ENCODE measurements at regions of chr7 and their contacts with region 1.

Region 1: GRCh38 chr7:26193432-26194207 is 6.9 kb downstream of the HNRNPA2B1 start:
- DNase-seq: no peak
- ATAC-seq: peak; percentile 56
- H3K4me3 ChIP-seq: peak overlapping the region; percentile 49; the same call in 1 of the 2 replicates
- H3K27ac ChIP-seq: no peak overlapping the region
- H3K4me1 ChIP-seq: peaks cover 27% of the 10 kb centered on the region
- H3K27me3 ChIP-seq: no peaks in the 10 kb centered on the region
- CTCF ChIP-seq: no peak
- EP300 ChIP-seq: no peak
- POLR2A ChIP-seq: no peak
- RAD21 ChIP-seq: no peak

Region 2: DNA sequence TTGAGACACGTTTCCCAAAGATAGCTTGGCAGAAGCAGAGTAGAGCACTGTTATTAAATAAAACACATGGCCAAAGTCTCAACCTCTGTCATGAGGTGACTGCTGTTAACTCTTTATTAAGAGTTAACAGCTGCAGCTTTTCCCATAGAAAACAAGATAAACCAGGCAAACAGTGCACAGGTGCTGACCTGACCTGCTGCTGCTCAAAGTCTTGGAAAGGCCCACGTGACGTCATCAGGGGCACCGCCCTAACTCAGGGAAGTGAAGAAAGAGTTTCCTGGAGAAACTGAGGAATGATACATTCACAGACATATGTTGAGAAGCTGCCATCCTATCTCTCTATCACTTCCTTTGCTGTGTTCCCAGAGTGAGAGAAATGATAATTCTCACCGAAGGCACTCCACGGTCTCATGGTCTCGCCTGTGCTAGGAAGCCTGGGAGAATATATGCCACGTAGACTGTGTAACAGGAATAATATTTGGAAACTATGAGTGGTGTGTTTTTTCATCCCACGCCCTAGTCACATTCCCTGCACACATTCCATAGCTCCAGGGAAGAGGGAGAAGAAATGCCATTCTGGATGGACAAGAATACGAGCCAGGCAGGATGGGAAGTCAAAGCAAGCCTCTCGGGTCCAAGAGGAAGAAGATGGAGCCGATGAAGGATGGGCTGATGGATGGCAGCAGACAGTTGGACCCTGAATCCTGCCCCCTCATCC is 187.8 kb before region 1 on chr7:
- CTCF ChIA-PET with region 1: no interaction called
- POLR2A ChIA-PET with region 1: no interaction called
- RAD21 ChIA-PET with region 1: no interaction called
- SMC1A ChIA-PET with region 1: no interaction called
- in situ Hi-C with region 1: no loop called
- intact Hi-C with region 1: no loop called
- DNase-seq: no peak
- ATAC-seq: no peak
- H3K4me3 ChIP-seq: no peak overlapping the region
- H3K27ac ChIP-seq: no peak overlapping the region
- H3K4me1 ChIP-seq: no peaks in the 10 kb centered on the region
- H3K27me3 ChIP-seq: peaks cover 0 to 4% of the 10 kb centered on the region in 2 experiments; a peak in 3 of 4 replicates
- CTCF ChIP-seq: no peak
- EP300 ChIP-seq: no peak
- POLR2A ChIP-seq: no peak
- RAD21 ChIP-seq: no peak

Region 3: GRCh38 chr7:26160881-26161280 is 32.7 kb before region 1 on chr7:
- CTCF ChIA-PET with region 1: interaction called, 104 read pairs
- POLR2A ChIA-PET with region 1: interaction called, 206 read pairs
- RAD21 ChIA-PET with region 1: interaction called, 164 read pairs
- SMC1A ChIA-PET with region 1: interaction called, 198 read pairs
- in situ Hi-C with region 1: no loop called
- intact Hi-C with region 1: loop called (anchors 2 kb)
- DNase-seq: no peak
- ATAC-seq: no peak
- H3K4me3 ChIP-seq: no peak overlapping the region
- H3K27ac ChIP-seq: no peak overlapping the region
- H3K4me1 ChIP-seq: peaks cover 28% of the 10 kb centered on the region
- H3K27me3 ChIP-seq: no peaks in the 10 kb centered on the region
- CTCF ChIP-seq: no peak
- EP300 ChIP-seq: no peak
- POLR2A ChIP-seq: no peak
- RAD21 ChIP-seq: no peak

Region 4: DNA sequence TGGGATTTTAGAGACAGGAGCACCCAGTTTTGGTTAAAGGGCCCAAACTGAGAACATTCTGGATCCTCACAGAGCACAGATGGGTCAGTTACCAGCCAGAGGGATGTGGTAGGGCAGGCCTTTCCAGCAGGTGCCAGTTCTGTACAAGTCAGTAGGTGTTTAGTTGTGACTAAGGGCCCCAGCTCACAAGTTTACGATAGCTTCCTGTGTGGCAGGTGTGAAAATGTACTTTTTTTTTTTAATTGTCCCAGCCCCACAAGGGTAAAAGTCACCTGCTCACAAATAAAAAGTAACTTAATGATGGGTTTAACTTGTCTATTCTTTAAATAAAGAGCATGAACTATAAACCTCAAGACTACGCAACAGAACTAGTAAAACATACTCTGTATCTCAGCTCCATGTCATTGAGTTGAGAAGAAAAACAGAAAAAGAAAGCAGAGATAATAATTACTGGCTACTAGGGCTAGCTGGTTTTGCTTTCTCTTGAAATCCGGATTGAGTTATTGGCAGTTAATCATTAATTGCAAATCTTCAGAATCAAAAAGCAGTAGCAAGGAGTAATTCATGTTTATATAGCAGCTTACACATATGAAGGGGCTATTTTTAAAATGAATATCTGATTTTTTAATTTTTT is 26.2 kb before region 1 on chr7:
- CTCF ChIA-PET with region 1: interaction called, 29 read pairs
- POLR2A ChIA-PET with region 1: interaction called, 206 read pairs
- RAD21 ChIA-PET with region 1: interaction called, 164 read pairs
- SMC1A ChIA-PET with region 1: interaction called, 198 read pairs
- in situ Hi-C with region 1: no loop called
- intact Hi-C with region 1: no loop called
- DNase-seq: no peak
- ATAC-seq: peak; percentile 94
- H3K4me3 ChIP-seq: 0 out of 2 replicates have a peak overlapping the region, but pooled peaks have one; percentile 31
- H3K27ac ChIP-seq: peak overlapping the region; percentile 43
- H3K4me1 ChIP-seq: peaks cover 17% of the 10 kb centered on the region
- H3K27me3 ChIP-seq: no peaks in the 10 kb centered on the region
- CTCF ChIP-seq: no peak
- EP300 ChIP-seq: no peak
- POLR2A ChIP-seq: no peak
- RAD21 ChIP-seq: no peak

Region 5: GRCh38 chr7:26182283-26182682 is 11.3 kb before region 1 on chr7:
- CTCF ChIA-PET with region 1: interaction called, 23 read pairs
- POLR2A ChIA-PET with region 1: interaction called, 25 read pairs
- RAD21 ChIA-PET with region 1: interaction called, 17 read pairs
- SMC1A ChIA-PET with region 1: interaction called, 23 read pairs
- in situ Hi-C with region 1: no loop called
- intact Hi-C with region 1: no loop called
- DNase-seq: no peak
- ATAC-seq: no peak
- H3K4me3 ChIP-seq: no peak overlapping the region
- H3K27ac ChIP-seq: no peak overlapping the region
- H3K4me1 ChIP-seq: peaks cover under 1% of the 10 kb centered on the region; the same call in 1 of the 2 replicates
- H3K27me3 ChIP-seq: no peaks in the 10 kb centered on the region
- CTCF ChIP-seq: no peak
- EP300 ChIP-seq: no peak
- POLR2A ChIP-seq: no peak; the same call in 1 of the 2 replicates
- RAD21 ChIP-seq: no peak